ENCODE measurements at regions of chr16 and their contacts with region 1.

Region 1: DNA sequence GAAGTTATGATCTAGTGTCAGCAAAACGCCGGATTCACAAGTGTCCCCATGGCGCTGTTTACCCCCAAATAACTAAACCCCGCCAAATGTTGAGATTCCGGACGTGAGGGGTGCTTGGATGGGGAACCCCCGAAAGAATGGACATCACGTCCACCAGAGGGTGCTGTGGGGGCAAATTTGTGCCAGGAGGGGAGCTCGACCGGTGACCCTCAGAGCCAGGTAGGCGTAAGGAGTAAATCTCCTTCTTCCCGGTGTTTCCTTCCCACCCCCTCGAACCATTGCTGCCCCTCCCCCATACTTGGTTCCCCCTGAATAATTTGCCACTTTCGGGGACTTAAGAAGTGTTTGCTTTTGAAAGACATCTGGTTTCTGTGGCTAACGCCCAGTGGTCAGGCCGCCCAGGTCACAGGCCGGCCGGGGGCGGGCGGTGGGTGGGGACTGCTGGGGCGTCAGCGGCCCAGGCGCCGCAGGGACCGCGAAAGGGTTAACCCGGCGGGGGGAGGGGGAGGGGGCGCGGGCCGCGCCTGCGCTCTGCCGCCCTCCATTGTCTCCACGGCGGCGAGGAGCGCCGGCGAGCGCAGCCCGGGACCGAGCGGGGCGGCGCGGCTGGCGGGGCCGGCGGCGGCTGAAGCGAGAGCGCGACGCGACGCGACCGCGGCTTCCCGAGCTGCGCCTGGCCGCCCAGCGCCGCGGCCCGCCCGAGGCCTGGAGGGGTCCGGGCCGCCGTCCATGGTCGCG is at the start of gene ZNRF1:
- DNase-seq: peak; percentile 58 to 85 (median 74)
- ATAC-seq: peak; percentile 81 to 86
- H3K4me3 Mint-ChIP-seq: peak within 1 kb of the TSS; percentile 81 to 93 (median 86)
- H3K27ac Mint-ChIP-seq: peak within 1 kb of the TSS; percentile 22 to 94 (median 86)
- H3K4me1 Mint-ChIP-seq: peaks cover 6 to 19% (median 14%) of the 10 kb centered on the region in 4 donors
- H3K27me3 Mint-ChIP-seq: peaks cover 0 to 25% (median 7%) of the 10 kb centered on the region in 5 donors
- polyA plus RNA-seq, gene ZNRF1: 0.73 to 1.3 (median 1.3) TPM

Region 2: GRCh38 chr16:74973153-74973703 is 25.4 kb before region 1 on chr16:
- POLR2A ChIA-PET with region 1: no interaction called
- DNase-seq: no peak
- ATAC-seq: no peak
- H3K4me3 Mint-ChIP-seq: no peak overlapping the region
- H3K27ac Mint-ChIP-seq: no peak overlapping the region
- H3K4me1 Mint-ChIP-seq: peaks cover 2 to 8% (median 6%) of the 10 kb centered on the region in 4 donors
- H3K27me3 Mint-ChIP-seq: no peaks in the 10 kb centered on the region

Region 3: DNA sequence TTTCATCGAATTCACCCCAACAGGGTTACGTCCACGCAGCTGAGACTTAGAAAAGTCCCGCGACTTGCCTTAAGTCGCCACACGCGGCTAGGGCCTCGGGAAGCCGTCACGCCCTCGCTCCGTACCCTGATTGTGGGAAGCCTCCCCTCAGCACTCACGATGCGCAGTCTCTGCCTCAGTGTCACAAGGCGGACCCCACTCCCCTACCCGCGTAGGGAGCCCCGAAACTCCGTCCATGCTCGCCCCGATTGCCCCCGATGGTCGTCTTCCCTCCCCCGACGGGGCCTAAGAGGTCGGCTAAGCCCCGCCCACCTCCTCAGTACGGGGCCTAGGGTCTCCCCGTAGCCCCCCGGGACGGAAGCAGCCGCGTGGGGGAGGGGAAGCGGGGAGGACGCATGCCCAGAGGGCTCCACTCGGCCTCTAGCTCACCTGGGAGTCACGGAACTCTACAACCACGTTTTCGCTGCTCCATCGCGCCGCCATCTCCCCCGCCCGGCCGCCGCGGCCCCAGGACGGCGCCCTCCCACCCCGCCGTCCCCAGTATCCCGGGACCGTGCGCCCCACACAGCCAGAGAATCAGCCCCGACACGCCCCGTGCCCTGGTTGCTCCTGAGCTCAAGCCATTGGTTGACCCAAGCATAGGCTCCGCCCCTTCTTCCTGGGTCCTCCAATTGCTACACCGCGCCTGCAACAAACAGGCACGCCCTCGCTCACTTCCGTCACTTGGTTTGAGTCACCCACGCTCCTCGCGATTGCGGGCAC is 13.9 kb before region 1 on chr16 and contains the start of gene WDR59:
- POLR2A ChIA-PET with region 1: interaction called, 14 read pairs
- DNase-seq: peak; percentile 89 to 99 (median 98)
- ATAC-seq: peak; percentile 97 to 98
- H3K4me3 Mint-ChIP-seq: peak within 1 kb of the TSS; percentile 90 to 100 (median 95)
- H3K27ac Mint-ChIP-seq: peak within 1 kb of the TSS; percentile 84 to 97 (median 92)
- H3K4me1 Mint-ChIP-seq: peaks cover 2 to 26% (median 14%) of the 10 kb centered on the region in 4 donors
- H3K27me3 Mint-ChIP-seq: no peaks in the 10 kb centered on the region
- polyA plus RNA-seq, gene WDR59: 6.9 to 12.9 (median 9.7) TPM

Region 4: DNA sequence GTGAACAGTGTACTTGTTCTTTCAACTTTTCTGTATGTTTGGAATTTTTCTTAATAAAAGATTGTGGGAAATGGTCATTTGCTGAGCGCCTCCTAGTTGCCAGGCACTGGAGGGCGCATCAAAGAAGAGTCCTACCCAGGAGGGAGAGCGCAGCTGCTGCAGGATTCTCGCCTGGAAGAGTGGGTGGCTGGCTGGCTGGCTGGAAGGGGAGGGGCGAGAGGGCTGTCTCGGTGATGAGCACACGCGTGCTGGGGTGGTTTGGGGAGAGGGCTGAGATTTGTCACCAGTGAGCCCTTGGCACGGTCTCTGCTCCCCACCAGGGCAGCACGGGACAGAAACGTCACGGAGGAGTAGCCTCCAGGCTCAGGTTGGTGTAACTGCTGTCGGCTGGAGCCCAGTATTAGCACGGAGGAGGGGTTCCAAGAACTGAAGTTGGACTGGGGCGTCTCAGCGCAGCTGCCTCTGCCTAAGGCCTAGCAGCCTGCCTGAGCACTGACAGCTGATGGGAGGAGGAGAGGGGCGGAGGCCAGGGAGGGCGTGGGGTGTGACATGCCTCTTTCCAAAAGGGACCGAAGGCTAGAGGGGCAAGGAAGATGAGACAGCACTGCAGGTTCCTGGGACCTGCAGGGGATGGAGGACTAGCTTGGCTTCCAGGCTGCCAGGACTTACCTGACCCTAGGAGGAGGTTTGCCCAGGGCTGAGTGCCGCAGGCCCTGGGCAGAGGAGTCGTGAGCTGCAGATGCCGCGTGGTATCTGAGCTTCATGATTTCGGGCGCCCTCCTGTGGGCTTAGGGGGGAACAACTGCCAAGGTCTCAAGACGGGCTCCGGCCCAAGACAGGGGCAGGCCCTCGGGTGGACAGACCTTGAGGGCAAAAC is 112.2 kb after region 1 on chr16:
- POLR2A ChIA-PET with region 1: interaction called, 22 read pairs
- DNase-seq: peak; percentile 58 to 88 (median 74)
- ATAC-seq: peak; percentile 84 to 93
- H3K4me3 Mint-ChIP-seq: peak overlapping the region in 8 of 10 donors; percentile 15 to 55 (median 22)
- H3K27ac Mint-ChIP-seq: peak overlapping the region in 6 of 10 donors; percentile 49 to 79 (median 64)
- H3K4me1 Mint-ChIP-seq: peaks cover 14 to 39% (median 31%) of the 10 kb centered on the region in 4 donors
- H3K27me3 Mint-ChIP-seq: peaks cover 2 to 16% (median 12%) of the 10 kb centered on the region in 5 donors